ENCODE measurements at regions of chr3 and their contacts with region 1.

Region 1: DNA sequence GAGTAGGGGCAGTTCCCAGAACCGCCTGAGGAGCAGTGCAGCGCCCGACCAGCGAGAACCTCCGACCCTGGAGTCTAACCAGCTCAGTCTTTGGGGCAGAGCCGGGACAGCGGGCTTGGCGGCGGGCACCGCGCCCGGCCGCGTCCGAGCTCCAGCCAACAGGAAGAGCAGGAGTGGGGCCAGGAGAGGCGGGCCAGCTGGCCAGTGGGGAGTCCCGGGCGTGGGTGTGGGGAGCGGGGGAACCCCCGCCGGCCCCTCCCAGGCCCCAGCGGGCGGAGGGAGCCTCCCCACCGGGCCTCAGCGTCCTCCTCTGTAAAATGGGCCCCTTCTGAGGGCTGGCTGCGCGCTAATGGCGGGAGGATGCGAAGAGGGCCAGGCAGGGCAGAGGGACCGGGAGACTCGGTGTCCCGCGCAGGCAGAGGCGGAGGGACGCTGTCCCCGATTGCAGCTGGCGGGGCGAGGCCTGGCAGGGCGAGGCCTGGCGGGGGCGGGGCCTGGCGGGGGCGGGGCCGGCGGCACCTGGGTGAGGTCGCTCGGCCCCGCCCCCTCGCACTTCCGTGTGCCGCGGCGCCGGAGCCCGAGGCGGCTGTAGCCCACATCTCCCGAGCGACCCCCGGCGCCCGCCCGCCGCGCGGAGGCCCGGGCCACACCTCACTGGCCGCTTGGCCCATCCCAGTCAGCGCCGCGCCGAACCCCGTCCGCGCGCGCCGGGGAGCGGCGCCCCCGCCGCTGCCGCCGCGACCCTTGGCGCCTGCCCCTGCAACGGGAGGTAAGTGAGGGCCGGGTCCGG is at the start of gene PRKCD:
- DNase-seq: peak; percentile 85
- H3K4me3 Mint-ChIP-seq: peak within 1 kb of the TSS; percentile 78
- H3K27ac Mint-ChIP-seq: peak within 1 kb of the TSS; percentile 57
- H3K4me1 Mint-ChIP-seq: peaks cover 19% of the 10 kb centered on the region
- H3K27me3 Mint-ChIP-seq: peaks cover 15% of the 10 kb centered on the region
- total RNA-seq, gene PRKCD: 23.8 to 25.9 TPM

Region 2: GRCh38 chr3:52529376-52530333 is 631.2 kb before region 1 on chr3:
- CTCF ChIA-PET with region 1: no interaction called
- POLR2A ChIA-PET with region 1: no interaction called
- intact Hi-C with region 1: no loop called
- DNase-seq: no peak
- H3K4me3 Mint-ChIP-seq: no peak overlapping the region
- H3K27ac Mint-ChIP-seq: no peak overlapping the region
- H3K4me1 Mint-ChIP-seq: peaks cover 7% of the 10 kb centered on the region
- H3K27me3 Mint-ChIP-seq: no peaks in the 10 kb centered on the region

Region 3: DNA sequence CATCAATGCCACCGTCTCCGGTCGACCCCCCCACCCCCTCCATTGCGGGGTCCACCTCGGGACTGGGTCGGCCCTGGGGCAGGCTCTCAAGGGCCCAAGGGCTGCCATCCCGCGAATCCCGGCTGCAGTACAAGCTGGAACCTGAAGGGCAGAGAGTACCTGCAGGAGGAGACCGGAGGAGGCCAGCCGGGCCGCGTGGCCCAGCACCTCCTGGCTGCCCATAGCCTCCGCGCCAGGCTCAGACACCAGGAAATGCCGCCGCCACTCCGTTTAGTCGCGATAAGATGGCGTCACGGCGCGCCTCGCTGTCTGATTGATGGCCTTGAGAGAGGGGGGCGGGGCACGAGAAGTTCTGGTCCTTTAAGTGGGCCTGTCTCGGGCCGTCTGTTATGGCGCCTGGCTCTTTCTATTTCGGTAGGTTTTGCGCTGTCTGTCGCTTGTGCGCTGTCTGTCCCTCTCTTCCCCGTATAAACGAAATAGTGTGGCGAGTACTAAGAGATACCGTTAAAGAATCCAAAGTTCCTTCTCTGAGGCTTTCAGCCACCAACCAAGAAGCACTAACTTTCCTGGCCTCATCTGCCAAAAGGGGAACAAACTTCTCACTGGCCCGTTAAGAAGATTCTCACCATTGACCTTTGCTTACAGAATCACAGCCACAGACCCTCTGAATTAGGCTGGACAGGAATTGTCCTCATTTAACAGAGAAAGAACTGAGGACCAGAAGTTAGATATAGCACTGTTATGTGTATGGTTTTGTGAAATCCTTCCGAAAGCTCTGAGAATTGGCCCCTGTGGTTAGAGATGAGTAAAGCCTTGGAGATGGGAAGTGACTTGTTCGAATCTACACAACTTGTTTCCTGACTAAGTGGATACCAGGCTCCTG is 30.4 kb before region 1 on chr3 and contains the start of gene RFT1:
- CTCF ChIA-PET with region 1: interaction called, 12 read pairs
- POLR2A ChIA-PET with region 1: interaction called, 5 read pairs
- intact Hi-C with region 1: loop called (anchors 1 kb)
- DNase-seq: peak; percentile 99
- H3K4me3 Mint-ChIP-seq: peak within 1 kb of the TSS; percentile 95
- H3K27ac Mint-ChIP-seq: peak within 1 kb of the TSS; percentile 97
- H3K4me1 Mint-ChIP-seq: peaks cover 21% of the 10 kb centered on the region
- H3K27me3 Mint-ChIP-seq: no peaks in the 10 kb centered on the region
- total RNA-seq, gene RFT1: 35.0 to 38.2 TPM